ENCODE measurements at regions of chr6 and their contacts with region 1.

Region 1: DNA sequence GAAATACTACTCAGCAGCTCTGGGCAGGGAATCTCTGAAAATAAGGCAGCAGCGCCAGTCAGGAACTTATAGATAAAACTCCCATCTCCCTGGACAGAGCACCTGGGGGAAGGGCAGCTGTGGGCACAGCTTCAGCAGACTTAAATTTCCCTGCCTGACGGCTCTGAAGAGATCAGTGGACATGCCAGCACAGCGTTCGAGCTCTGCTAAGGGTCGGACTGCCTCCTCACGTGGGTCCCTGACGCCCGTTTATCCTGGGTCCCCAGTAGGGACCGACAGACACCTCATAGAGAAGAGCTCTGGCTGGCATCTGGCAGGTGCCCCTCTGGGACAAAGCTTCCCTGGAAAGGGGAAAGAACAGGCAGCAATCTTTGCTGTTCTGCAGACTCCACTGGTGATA is 59.0 kb downstream of the COL21A1 start:
- DNase-seq: no peak
- H3K4me3 ChIP-seq: no peak overlapping the region
- CTCF ChIP-seq: no peak

Region 2: GRCh38 chr6:56255349-56255748 is 66.9 kb after region 1 on chr6:
- in situ Hi-C with region 1: no loop called
- DNase-seq: no peak
- H3K4me3 ChIP-seq: no peak overlapping the region
- CTCF ChIP-seq: no peak

Region 3: DNA sequence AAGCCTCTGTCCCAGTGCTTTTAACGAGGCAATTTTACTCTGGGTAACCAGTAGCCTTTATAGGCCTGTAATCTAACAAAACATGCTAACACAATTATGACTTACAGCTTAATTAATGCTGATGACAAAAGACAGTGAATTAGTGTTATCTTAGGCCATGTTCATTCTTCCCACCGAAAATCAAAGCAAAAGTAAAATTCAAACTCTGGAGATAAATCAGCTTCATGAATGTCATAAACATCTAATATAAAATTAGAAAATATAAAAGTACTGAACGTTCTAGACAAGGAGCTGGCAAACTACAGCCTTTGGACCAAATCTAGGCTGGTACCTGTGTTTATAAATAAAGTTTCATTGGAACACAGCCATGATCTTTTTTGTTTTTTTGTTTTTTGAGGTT is 77.6 kb after region 1 on chr6:
- in situ Hi-C with region 1: no loop called
- DNase-seq: no peak
- H3K4me3 ChIP-seq: no peak overlapping the region
- CTCF ChIP-seq: no peak

Region 4: DNA sequence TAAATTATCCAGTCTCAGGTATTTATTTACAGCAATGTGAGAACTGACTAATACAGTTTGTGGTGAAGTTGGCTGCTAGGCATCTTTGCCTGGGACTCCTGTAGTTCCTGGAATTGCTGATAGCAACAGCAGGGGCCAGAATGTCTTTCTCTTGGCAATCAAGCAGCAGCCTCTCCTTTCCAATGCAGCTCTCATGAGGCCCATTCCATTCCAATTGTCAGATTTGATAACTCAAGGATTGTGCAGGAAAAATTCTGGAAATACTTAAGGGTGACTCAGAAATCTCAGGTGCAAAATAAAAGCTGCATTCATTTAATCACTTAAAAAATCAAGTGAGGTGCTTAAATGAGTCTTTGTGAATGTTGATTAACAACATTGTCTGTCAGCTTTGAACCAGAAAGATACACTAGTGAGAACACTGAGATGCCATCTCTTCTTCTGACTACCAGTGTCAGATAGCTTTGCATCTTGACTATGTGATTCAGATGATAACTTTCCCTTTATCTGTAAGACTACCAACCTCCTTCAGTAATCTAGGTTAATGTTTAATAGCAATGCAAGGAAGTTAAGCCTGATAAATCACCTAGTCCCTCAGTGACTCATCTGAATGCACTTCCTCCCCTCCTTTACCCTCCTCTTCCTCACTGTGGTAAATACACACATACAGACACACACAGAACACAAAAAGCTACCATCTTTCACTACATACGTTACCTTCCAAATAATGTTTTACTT is 91.1 kb after region 1 on chr6:
- in situ Hi-C with region 1: loop called (anchors 5 kb)
- DNase-seq: peak; percentile 76
- H3K4me3 ChIP-seq: no peak overlapping the region
- CTCF ChIP-seq: no peak